Transverse colon (tissue), 4 donors: ENCODE measurements at regions of chr6 and their contacts with region 1.

Region 1: DNA sequence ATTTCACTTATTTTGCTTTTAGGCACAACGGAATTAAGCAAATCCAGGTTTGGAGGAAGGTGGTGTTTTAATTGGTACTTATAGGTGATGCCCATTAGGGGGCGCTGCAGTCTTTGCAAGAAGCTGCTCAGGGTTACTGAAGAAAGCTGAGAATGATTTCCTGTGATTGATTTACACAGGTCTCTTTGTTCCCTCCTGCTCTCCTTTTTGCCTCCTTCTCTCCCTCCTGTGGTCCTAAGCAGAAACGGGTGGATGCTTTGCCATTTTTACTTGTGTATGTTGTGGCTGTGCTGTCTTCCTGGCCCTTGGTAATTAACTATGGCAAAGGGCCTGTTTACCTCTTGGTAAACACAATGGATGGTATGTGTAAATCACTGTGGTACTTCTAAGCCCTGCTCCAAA is 97.8 kb downstream of the ANKS1A start:
- DNase-seq: peak; percentile 71
- H3K4me3 ChIP-seq: no peak overlapping the region
- H3K27ac ChIP-seq: peak overlapping the region in 1 of 4 donors; percentile 36
- H3K4me1 ChIP-seq: peaks cover 4 to 13% (median 4%) of the 10 kb centered on the region in 4 donors
- H3K27me3 ChIP-seq: no peaks in the 10 kb centered on the region
- CTCF ChIP-seq: peak; percentile 78 to 91 (median 87)
- EP300 ChIP-seq: no peak
- POLR2A ChIP-seq: no peak

Region 2: DNA sequence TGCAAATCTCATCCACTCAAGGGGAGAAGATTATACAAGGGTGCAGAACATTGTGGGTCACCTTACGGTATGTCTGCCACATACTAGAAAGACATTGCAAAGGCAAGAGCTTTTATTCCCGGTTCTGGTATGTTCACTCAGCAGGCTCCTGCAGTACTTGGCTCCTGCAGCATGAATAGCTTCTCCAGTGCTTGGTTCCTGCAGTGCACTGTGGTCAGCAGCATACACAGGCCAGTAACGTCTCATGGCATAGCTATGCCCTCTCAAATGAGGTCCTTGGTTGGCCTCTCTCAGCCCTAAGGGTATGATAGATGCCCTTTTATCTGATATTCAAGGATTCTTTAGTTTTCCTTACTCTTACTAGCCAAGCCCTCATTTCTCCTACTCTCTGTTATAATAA is 141.7 kb after region 1 on chr6:
- in situ Hi-C with region 1: loop called in 2 of 4 experiments (anchors 5 to 10 kb)
- intact Hi-C with region 1: no loop called
- DNase-seq: no peak
- H3K4me3 ChIP-seq: no peak overlapping the region
- H3K27ac ChIP-seq: no peak overlapping the region
- H3K4me1 ChIP-seq: no peaks in the 10 kb centered on the region
- H3K27me3 ChIP-seq: no peaks in the 10 kb centered on the region
- CTCF ChIP-seq: no peak
- EP300 ChIP-seq: no peak
- POLR2A ChIP-seq: no peak

Region 3: GRCh38 chr6:35139908-35140655 is 153.2 kb after region 1 on chr6:
- in situ Hi-C with region 1: loop called in 3 of 4 experiments (anchors 5 to 10 kb)
- intact Hi-C with region 1: loop called (anchors 2 kb)
- DNase-seq: peak; percentile 58
- H3K4me3 ChIP-seq: no peak overlapping the region
- H3K27ac ChIP-seq: no peak overlapping the region
- H3K4me1 ChIP-seq: peaks cover 0 to 23% (median 13%) of the 10 kb centered on the region in 4 donors
- H3K27me3 ChIP-seq: no peaks in the 10 kb centered on the region
- CTCF ChIP-seq: peak; percentile 80 to 91 (median 84)
- EP300 ChIP-seq: no peak
- POLR2A ChIP-seq: no peak

Region 4: GRCh38 chr6:35202066-35202546 is 215.3 kb after region 1 on chr6:
- in situ Hi-C with region 1: loop called in 1 of 4 experiments (anchors 25 kb)
- intact Hi-C with region 1: loop called (anchors 10 kb)
- DNase-seq: no peak
- H3K4me3 ChIP-seq: no peak overlapping the region
- H3K27ac ChIP-seq: no peak overlapping the region
- H3K4me1 ChIP-seq: peaks cover 0 to 14% (median 1%) of the 10 kb centered on the region in 4 donors
- H3K27me3 ChIP-seq: peaks cover 20% of the 10 kb centered on the region
- CTCF ChIP-seq: no peak
- EP300 ChIP-seq: no peak
- POLR2A ChIP-seq: no peak

Region 5: DNA sequence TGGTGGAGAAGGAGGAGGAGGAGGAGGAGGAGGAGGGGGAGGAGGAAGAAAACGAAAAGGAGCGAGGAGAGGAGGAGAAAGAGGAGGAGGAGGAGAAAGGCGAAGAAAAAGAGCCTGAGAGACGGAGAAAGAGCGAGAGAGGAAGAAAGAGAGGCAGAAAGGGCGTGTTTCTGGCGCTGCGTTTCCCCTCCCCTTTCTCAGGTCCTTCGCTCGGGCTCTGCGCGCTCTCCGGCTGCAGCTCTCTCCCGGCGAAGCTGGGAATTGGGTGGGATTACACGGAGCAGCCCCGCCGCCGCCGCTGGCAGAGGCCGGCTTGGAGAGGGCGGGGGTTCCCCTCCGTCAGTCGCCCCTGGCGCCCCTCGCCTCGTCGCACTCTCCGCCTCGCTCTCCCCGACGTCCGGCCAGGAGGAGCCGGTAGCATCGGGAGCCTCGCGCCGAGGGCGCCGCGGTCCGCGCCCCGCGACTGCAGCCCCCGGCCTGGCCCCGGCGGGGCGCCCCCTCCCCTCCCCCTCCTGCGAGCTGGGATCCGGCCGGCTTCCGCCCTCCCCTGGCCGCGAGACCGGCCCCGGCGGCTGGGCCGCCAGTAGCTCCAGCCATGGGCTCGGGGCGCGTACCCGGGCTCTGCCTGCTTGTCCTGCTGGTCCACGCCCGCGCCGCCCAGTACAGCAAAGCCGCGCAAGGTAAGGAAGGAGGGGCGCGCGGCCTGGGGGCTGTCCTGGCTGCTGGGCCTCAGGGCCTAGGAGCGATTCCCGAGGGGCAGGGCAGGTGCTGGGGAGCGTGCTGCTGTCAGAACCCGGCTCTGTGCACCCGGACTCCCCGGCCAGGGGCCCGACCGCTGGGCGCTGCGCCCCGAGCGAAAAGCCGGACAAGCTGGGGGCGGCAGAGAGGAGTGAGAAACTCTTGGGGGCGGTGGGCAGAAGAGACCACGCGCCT is 227.2 kb after region 1 on chr6 and contains the start of gene SCUBE3:
- in situ Hi-C with region 1: loop called in 1 of 4 experiments (anchors 25 kb)
- intact Hi-C with region 1: loop called (anchors 10 kb)
- DNase-seq: no peak
- H3K4me3 ChIP-seq: peak within 1 kb of the TSS; percentile 28 to 58 (median 48)
- H3K27ac ChIP-seq: peak within 1 kb of the TSS in 1 of 4 donors; percentile 8
- H3K4me1 ChIP-seq: peaks cover 5 to 23% (median 13%) of the 10 kb centered on the region in 4 donors
- H3K27me3 ChIP-seq: peaks cover 92% of the 10 kb centered on the region
- CTCF ChIP-seq: no peak
- EP300 ChIP-seq: no peak
- POLR2A ChIP-seq: no peak
- total RNA-seq, gene SCUBE3: 0.37 to 0.68 (median 0.52) TPM

Region 6: DNA sequence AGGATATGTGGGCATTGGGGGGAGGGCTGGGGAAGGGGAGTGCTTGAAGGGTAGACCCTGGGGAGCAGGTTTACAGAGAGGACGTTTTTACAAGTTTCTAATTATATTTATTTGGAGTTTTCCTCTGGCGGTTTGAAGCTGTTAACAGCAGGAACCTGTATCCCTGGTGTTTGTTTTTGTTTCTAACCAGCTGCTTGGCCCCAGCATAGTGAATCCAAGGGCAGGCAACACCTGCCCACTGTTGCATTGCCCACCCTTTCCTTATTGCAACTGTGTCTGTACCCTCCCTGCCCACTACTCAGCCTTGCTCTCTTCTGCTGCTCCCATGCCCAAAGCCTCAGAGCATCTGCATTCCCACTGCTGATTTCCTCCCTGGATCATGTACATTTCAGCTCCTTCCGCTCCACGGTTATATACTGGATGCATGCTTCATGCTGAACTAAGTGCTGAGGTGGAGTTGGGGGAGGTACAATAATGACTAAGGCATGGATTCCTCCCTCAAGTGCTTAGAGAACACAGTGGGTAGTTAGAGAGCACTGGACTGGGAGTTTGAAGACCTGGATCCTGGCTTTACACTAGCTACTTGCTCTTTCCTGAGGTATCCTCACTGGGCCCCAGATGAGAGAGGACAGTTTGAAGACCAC is 233.0 kb after region 1 on chr6:
- in situ Hi-C with region 1: loop called in 3 of 4 experiments (anchors 10 to 25 kb)
- intact Hi-C with region 1: no loop called
- DNase-seq: no peak
- H3K4me3 ChIP-seq: no peak overlapping the region
- H3K27ac ChIP-seq: no peak overlapping the region
- H3K4me1 ChIP-seq: peaks cover 0 to 6% (median 0%) of the 10 kb centered on the region in 4 donors
- H3K27me3 ChIP-seq: peaks cover 37% of the 10 kb centered on the region
- CTCF ChIP-seq: no peak
- EP300 ChIP-seq: no peak
- POLR2A ChIP-seq: no peak

Region 7: GRCh38 chr6:35240840-35241801 is 254.3 kb after region 1 on chr6:
- in situ Hi-C with region 1: loop called in 1 of 4 experiments (anchors 25 kb)
- intact Hi-C with region 1: loop called (anchors 5 kb)
- DNase-seq: peak; percentile 78
- H3K4me3 ChIP-seq: no peak overlapping the region
- H3K27ac ChIP-seq: no peak overlapping the region
- H3K4me1 ChIP-seq: peaks cover 0 to 7% (median 5%) of the 10 kb centered on the region in 4 donors
- H3K27me3 ChIP-seq: no peaks in the 10 kb centered on the region
- CTCF ChIP-seq: peak; percentile 91 to 96 (median 94)
- EP300 ChIP-seq: no peak
- POLR2A ChIP-seq: no peak